ENCODE measurements at regions of chr15 and their contacts with region 1.

Region 1: DNA sequence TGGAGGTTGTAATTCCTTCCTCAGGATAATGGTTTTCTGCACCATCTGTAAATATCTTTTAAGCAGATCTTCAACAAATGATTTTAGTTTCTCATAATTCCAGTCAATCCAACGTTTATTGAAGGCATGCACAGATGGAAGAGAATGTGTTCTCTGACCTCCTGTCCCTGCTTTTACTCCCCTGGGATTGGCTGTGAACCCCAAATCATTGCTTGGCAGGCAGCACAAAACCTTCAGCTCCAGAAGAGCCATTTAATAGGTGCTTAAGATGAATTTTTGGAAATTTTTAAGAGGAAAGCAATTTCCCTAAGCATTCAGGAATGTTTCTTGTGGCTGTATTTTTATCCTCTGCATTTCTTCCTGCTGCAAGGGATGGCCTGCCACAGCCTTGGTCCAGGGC is 25.5 kb upstream of the THSD4 start:
- DNase-seq: no peak
- ATAC-seq: no peak
- H3K4me3 Mint-ChIP-seq: no peak overlapping the region
- H3K27ac Mint-ChIP-seq: no peak overlapping the region
- H3K4me1 Mint-ChIP-seq: peaks cover 19% of the 10 kb centered on the region
- H3K27me3 Mint-ChIP-seq: peaks cover 93% of the 10 kb centered on the region
- CTCF ChIP-seq: no peak

Region 2: DNA sequence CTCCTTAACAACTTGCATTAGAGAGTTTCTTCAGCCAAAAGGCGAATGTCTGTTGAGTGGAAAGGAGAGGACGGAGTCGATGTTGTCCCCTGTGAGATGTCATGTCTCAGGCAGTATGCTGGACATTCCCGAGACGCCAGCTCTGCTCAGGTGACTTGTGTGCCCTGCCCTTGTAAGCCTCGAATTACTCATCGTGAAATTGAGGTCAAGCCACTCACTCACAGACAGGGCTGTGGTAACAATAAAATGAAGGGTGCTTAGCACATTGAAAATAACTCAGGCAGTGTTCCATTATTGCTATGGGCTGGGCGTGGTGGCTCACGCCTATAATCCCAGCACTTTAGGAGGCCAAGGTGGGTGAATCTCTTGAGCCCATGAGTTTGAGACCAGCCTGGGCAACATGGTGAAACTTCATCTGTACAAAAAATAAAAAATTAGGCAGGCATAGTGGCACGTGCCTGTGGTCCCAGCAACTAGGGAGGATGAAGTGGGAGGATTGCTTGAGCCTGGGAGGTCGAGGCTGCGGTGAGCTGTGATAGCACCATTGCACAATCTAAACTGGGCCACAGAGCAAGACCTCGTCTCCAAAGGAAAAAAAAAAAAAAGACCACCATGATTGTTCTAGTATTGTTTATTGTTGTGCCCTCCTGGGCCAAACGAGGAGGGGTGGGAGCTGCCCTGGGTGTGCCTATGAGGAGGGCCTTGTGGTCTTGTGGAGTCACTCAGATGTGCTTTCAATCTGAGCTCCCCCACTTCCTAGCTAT is 239.9 kb after region 1 on chr15:
- CTCF ChIA-PET with region 1: no interaction called
- POLR2A ChIA-PET with region 1: no interaction called
- DNase-seq: no peak
- ATAC-seq: no peak
- H3K4me3 Mint-ChIP-seq: no peak overlapping the region
- H3K27ac Mint-ChIP-seq: 0 out of 2 replicates have a peak overlapping the region, but pooled peaks have one; percentile 26
- H3K4me1 Mint-ChIP-seq: peaks cover 20% of the 10 kb centered on the region
- H3K27me3 Mint-ChIP-seq: no peaks in the 10 kb centered on the region
- CTCF ChIP-seq: no peak

Region 3: DNA sequence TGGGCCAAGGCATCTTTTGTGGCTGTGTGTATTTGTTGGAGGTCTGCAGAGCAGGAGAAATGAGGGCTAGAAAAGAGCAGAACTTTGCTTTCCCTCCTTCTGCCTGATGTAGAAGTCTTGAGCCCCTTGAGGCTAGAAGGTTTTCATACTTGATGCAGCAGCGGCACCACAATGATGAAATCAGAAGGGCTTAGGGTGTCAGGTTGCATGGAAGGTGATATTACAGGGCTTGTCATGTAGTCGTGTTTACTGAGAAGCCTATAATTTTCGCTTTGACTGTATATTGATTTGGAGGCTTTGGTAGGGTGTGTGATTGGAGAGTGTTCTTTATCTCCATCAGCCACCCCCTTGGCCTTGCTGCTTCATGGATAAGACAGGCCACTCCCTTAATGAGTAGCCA is 365.3 kb after region 1 on chr15:
- CTCF ChIA-PET with region 1: no interaction called
- POLR2A ChIA-PET with region 1: no interaction called
- DNase-seq: no peak
- ATAC-seq: no peak
- H3K4me3 Mint-ChIP-seq: no peak overlapping the region
- H3K27ac Mint-ChIP-seq: no peak overlapping the region
- H3K4me1 Mint-ChIP-seq: peaks cover 12% of the 10 kb centered on the region
- H3K27me3 Mint-ChIP-seq: no peaks in the 10 kb centered on the region
- CTCF ChIP-seq: no peak

Region 4: GRCh38 chr15:71526060-71526820 is 436.4 kb after region 1 on chr15:
- CTCF ChIA-PET with region 1: no interaction called
- POLR2A ChIA-PET with region 1: interaction called, 15 read pairs
- DNase-seq: no peak
- ATAC-seq: no peak
- H3K4me3 Mint-ChIP-seq: no peak overlapping the region
- H3K27ac Mint-ChIP-seq: peak overlapping the region; percentile 21; the same call in 1 of the 2 replicates
- H3K4me1 Mint-ChIP-seq: peaks cover 10% of the 10 kb centered on the region
- H3K27me3 Mint-ChIP-seq: no peaks in the 10 kb centered on the region; the same call in 1 of the 2 replicates
- CTCF ChIP-seq: no peak